GM10248 (cell line): ENCODE measurements at regions of chr6 and their contacts with region 1.

Region 1: GRCh38 chr6:63319939-63320338 is at the start of gene LGSN:
- DNase-seq: no peak
- CTCF ChIP-seq: no peak

Region 2: GRCh38 chr6:63289269-63289872 is 30.6 kb before region 1 on chr6:
- CTCF ChIA-PET with region 1: no interaction called
- POLR2A ChIA-PET with region 1: no interaction called
- DNase-seq: no peak
- CTCF ChIP-seq: no peak

Region 3: GRCh38 chr6:63307581-63308246 is 12.2 kb before region 1 on chr6:
- CTCF ChIA-PET with region 1: interaction called, 12 read pairs
- POLR2A ChIA-PET with region 1: no interaction called
- DNase-seq: peak; percentile 36
- CTCF ChIP-seq: peak; percentile 51

Region 4: GRCh38 chr6:63372951-63373533 is 53.1 kb after region 1 on chr6:
- CTCF ChIA-PET with region 1: no interaction called
- POLR2A ChIA-PET with region 1: no interaction called
- DNase-seq: no peak
- CTCF ChIP-seq: no peak